ENCODE measurements at regions of chr6 and their contacts with region 1.

Region 1: DNA sequence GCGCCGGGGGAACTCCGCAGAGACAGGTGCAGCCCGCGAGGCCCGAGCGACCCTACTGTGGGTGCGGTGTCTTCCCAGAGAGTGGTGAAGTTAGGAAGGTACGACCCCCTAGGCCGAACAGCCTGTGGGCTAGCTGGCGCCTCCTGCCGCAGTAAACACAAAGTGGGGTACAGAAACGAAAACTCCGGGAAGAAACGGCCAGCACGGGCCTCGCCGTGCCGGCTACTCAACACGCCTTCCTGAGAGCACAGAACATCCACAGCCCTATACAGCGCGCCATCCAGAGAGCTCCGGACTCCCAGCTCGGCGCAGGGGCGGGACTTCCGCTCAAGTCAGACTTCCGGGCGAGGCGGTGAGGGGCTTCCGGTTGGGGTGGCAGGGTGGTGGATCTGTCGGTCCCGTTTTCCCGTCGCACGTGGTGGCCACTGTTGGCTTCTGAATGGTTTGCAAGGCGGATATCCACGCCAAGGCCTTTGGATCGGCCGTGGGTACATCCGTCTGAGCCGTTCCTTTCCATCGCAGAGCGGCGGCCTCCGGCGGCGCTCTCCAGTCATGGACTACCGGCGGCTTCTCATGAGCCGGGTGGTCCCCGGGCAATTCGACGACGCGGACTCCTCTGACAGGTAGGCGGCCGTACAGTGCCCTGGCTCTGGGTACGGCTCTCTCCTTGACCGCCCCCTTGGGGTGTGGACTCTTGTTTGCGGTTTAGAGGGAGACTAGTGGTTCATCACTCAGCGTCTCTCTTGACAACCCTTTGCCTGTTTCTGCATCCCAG is at the starts of genes CAGE1 and RIOK1:
- DNase-seq: peak; percentile 92 to 96 (median 94)
- ATAC-seq: peak; percentile 94
- H3K4me3 ChIP-seq: peak within 1 kb of the TSS; percentile 95
- H3K4me3 Mint-ChIP-seq: peak within 1 kb of the TSS; percentile 87 to 97 (median 94)
- H3K27ac ChIP-seq: peak within 1 kb of the TSS; percentile 85
- H3K27ac Mint-ChIP-seq: peak within 1 kb of the TSS; percentile 96 to 100 (median 99)
- H3K4me1 ChIP-seq: peaks cover 20 to 21% of the 10 kb centered on the region in 2 donors
- H3K4me1 Mint-ChIP-seq: peaks cover 31 to 56% (median 50%) of the 10 kb centered on the region in 7 donors
- H3K27me3 ChIP-seq: no peaks in the 10 kb centered on the region
- H3K27me3 Mint-ChIP-seq: no peaks in the 10 kb centered on the region
- total RNA-seq, gene CAGE1: 0.16 to 0.48 (median 0.22) TPM
- total RNA-seq, gene RIOK1: 24.4 to 39.9 (median 27.6) TPM

Region 2: DNA sequence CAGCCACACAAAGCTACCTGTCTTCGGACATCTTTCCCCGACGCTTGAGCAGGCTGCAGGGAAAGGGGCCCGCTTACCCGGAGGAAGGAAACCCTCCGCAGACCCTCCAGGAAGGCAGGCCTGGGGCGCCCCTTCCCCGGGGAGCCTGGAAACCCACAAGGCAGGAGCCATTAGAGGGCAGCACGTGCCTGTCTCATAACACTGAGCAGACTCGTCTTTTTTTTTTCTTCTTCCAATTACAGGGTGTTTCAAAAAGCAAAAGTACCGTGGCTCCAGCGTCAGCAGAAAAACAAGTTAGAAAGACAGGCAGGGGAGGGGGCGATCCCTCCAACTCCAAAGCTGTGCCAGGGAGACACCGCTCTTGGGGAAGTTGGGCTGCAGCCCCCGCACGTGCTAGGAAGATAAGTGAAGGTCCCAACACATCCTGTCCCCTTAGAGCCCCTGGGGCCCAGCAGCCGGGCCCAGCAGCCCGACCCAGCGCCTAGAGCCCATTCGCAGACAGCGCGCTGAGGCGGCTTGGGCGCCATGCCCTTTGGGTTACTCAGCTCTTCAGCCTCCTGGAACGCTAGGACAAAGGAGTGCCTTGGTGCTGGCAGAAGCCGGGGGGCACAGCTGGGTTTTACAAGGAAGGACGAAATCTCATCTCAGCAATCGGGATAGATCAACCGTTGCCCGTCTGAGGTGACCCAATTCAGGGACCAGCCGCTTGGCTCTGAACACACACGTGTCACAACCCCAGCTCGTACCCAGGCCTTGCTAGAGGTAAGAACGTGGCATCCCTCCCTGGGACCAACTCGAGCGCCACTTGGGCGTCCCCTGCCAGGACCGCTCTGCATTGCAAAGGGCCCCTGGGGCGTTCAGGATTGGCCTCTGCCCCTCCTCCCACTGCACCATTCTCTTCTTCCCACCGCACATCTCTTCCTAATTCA is 664.8 kb before region 1 on chr6:
- CTCF ChIA-PET with region 1: no interaction called
- POLR2A ChIA-PET with region 1: no interaction called
- intact Hi-C with region 1: loop called in 1 of 2 experiments (anchors 1 kb)
- DNase-seq: peak; percentile 33 to 74 (median 62)
- ATAC-seq: peak; percentile 82
- H3K4me3 ChIP-seq: peak overlapping the region; percentile 44
- H3K4me3 Mint-ChIP-seq: peak overlapping the region; percentile 67 to 89 (median 81)
- H3K27ac ChIP-seq: no peak overlapping the region
- H3K27ac Mint-ChIP-seq: peak overlapping the region; percentile 47 to 84 (median 74)
- H3K4me1 ChIP-seq: peaks cover 0 to 5% of the 10 kb centered on the region in 2 donors
- H3K4me1 Mint-ChIP-seq: peaks cover 6 to 28% (median 12%) of the 10 kb centered on the region in 7 donors
- H3K27me3 ChIP-seq: no peaks in the 10 kb centered on the region
- H3K27me3 Mint-ChIP-seq: peaks cover 0 to 43% (median 0%) of the 10 kb centered on the region in 5 donors

Region 3: GRCh38 chr6:6905961-6906518 is 483.6 kb before region 1 on chr6:
- CTCF ChIA-PET with region 1: no interaction called
- POLR2A ChIA-PET with region 1: no interaction called
- intact Hi-C with region 1: no loop called
- DNase-seq: no peak
- ATAC-seq: no peak
- H3K4me3 ChIP-seq: no peak overlapping the region
- H3K4me3 Mint-ChIP-seq: no peak overlapping the region
- H3K27ac ChIP-seq: no peak overlapping the region
- H3K27ac Mint-ChIP-seq: no peak overlapping the region
- H3K4me1 ChIP-seq: no peaks in the 10 kb centered on the region
- H3K4me1 Mint-ChIP-seq: peaks cover 0 to 2% (median 0%) of the 10 kb centered on the region in 7 donors
- H3K27me3 ChIP-seq: no peaks in the 10 kb centered on the region
- H3K27me3 Mint-ChIP-seq: peaks cover 0 to 42% (median 0%) of the 10 kb centered on the region in 5 donors

Region 4: DNA sequence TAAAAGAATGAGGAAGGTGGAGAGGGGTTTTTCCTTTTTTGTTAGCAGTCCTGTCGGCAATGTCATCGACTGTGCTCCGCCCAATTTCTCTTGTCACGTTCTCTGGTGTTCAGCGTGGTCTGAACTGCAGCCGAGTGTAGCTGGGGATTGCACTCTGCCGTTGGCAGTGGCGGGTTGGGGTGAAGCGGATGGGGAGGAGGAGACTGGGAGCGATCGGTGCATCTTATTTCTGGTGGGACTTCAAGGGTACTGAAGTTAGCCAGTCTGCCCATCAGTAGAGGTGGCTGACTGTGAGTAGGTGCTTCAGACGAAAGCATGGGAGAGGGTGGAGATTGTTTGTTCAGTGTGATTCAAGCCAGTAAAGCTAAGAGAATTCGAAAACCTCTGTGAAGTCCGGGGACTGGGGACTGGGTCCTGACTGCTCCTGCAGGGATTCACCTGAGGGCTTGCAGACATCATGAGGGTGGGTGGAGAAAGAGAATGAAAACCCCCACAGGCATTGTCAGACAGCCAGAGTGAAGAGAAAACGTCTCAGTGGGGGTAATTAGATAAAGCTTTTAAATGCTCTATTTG is 276.8 kb before region 1 on chr6:
- CTCF ChIA-PET with region 1: no interaction called
- POLR2A ChIA-PET with region 1: interaction called, 3 read pairs
- intact Hi-C with region 1: loop called in 1 of 2 experiments (anchors 10 kb)
- DNase-seq: peak; percentile 31 to 77 (median 62)
- ATAC-seq: peak; percentile 79
- H3K4me3 ChIP-seq: peak overlapping the region; percentile 3
- H3K4me3 Mint-ChIP-seq: peak overlapping the region; percentile 63 to 92 (median 82)
- H3K27ac ChIP-seq: peak overlapping the region; percentile 82
- H3K27ac Mint-ChIP-seq: peak overlapping the region; percentile 65 to 94 (median 88)
- H3K4me1 ChIP-seq: peaks cover 9 to 59% of the 10 kb centered on the region in 2 donors
- H3K4me1 Mint-ChIP-seq: peaks cover 57 to 84% (median 78%) of the 10 kb centered on the region in 7 donors
- H3K27me3 ChIP-seq: no peaks in the 10 kb centered on the region
- H3K27me3 Mint-ChIP-seq: no peaks in the 10 kb centered on the region

Region 5: GRCh38 chr6:7276199-7276524 is 113.5 kb before region 1 on chr6:
- CTCF ChIA-PET with region 1: interaction called, 4 read pairs
- POLR2A ChIA-PET with region 1: interaction called, 4 read pairs
- intact Hi-C with region 1: loop called (anchors 1 kb)
- DNase-seq: no peak
- ATAC-seq: no peak
- H3K4me3 ChIP-seq: no peak overlapping the region
- H3K4me3 Mint-ChIP-seq: no peak overlapping the region
- H3K27ac ChIP-seq: no peak overlapping the region
- H3K27ac Mint-ChIP-seq: peak overlapping the region in 1 of 9 donors; percentile 56
- H3K4me1 ChIP-seq: no peaks in the 10 kb centered on the region
- H3K4me1 Mint-ChIP-seq: peaks cover 6 to 13% (median 10%) of the 10 kb centered on the region in 7 donors
- H3K27me3 ChIP-seq: no peaks in the 10 kb centered on the region
- H3K27me3 Mint-ChIP-seq: no peaks in the 10 kb centered on the region

Region 6: DNA sequence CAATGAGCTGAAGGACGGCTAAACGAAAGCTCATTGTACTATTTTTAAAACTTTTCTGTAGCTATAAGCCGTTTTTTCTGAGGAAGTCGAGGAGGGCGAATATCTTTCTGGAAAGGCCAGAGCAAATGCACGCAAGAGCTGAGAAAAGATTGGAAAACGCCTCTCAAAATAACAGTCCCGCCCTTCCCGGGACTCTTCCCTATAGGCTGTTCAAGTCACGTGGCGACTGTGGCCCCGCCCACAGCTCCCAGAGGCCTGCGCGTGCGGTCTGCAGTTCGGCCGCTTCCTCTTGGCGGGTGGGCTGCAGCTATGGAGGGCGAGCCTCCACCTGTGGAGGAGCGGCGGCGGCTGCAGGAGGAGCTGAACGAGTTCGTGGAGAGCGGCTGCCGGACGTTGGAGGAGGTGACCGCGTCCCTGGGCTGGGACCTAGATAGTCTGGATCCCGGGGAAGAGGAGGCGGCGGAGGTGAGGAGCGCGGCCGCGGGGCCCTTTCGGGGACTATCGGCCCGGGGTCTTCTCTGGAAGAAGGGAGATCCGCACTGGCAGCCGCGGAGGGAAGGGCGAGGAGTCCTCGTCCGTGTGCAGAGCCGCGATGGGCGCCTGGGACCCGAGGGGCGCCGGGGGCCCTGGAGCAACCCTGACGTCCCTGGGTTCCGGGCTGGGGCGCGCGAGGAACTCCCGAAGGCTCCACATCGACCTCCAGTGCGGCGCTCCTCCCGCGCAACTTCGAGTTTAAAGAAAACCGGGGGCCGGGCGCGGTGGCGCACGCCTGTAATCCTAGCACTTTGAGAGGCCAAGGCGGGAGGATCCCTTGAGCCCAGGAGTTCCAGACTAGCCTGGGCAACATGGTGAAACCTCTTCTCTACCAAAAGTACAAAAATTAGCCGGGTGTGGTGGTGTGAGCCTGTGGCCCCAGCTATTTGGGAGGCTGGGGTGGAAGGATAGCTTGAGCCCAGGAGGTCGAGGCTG is 200.6 kb after region 1 on chr6 and contains the start of gene SNRNP48:
- CTCF ChIA-PET with region 1: no interaction called
- POLR2A ChIA-PET with region 1: interaction called, 4 read pairs
- intact Hi-C with region 1: loop called (anchors 1 kb)
- DNase-seq: peak; percentile 83 to 93 (median 88)
- ATAC-seq: peak; percentile 99
- H3K4me3 ChIP-seq: peak within 1 kb of the TSS; percentile 89
- H3K4me3 Mint-ChIP-seq: peak within 1 kb of the TSS; percentile 93 to 100 (median 99)
- H3K27ac ChIP-seq: peak within 1 kb of the TSS; percentile 77
- H3K27ac Mint-ChIP-seq: peak within 1 kb of the TSS; percentile 90 to 97 (median 94)
- H3K4me1 ChIP-seq: peaks cover 12 to 17% of the 10 kb centered on the region in 2 donors
- H3K4me1 Mint-ChIP-seq: peaks cover 28 to 62% (median 54%) of the 10 kb centered on the region in 7 donors
- H3K27me3 ChIP-seq: no peaks in the 10 kb centered on the region
- H3K27me3 Mint-ChIP-seq: peaks cover 0 to 2% (median 0%) of the 10 kb centered on the region in 5 donors
- total RNA-seq, gene SNRNP48: 8.6 to 30.4 (median 15.3) TPM

Region 7: DNA sequence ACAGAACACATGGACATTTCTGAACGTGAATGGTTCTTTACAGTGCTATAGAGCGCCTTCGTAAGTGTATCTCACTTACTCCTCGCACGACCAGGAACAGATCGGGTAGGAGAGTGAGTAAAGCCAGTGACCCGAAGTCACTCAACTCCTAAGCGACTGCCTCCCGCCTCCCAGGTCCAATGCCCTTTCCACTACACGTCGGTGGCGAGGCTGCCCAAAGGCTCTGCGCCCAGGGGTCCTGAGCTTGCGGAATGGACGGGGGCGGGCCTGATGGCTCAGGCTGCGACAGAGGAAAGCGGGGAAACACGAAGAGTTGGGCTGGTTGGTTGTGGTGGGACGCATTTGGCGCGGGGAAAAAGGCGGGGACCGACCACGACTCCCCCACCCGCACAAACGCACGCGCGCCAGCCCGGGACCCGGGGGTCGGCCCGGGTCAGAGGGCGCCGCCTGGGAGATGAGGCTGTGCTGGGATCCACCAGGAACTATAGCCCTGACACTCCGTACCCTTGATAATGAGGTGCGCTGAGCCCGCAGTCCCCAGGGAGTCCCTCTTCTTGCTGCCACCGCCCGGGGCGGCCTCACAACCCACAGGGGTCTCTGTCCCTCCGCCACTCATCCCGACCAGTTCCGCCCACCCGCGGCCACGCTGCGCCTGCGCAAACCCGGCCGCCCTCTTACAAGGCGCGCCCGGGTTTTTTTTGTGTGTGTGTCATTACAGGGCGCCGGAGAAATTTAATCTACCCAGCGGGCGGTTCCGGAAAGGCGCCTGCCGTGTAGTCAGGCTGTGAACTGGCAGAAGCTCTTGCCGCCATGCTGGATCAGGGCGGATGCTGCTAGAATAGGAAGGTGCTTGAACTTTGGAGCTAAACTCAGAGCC is 674.4 kb after region 1 on chr6 and contains the start of gene BLOC1S5:
- CTCF ChIA-PET with region 1: no interaction called
- POLR2A ChIA-PET with region 1: interaction called, 5 read pairs
- intact Hi-C with region 1: loop called (anchors 1 kb)
- DNase-seq: peak; percentile 89 to 99 (median 97)
- ATAC-seq: peak; percentile 98
- H3K4me3 ChIP-seq: peak within 1 kb of the TSS; percentile 89
- H3K4me3 Mint-ChIP-seq: peak within 1 kb of the TSS; percentile 91 to 98 (median 95)
- H3K27ac ChIP-seq: peak within 1 kb of the TSS; percentile 92
- H3K27ac Mint-ChIP-seq: peak within 1 kb of the TSS; percentile 91 to 97 (median 95)
- H3K4me1 ChIP-seq: peaks cover 10% of the 10 kb centered on the region in 2 donors
- H3K4me1 Mint-ChIP-seq: peaks cover 9 to 38% (median 28%) of the 10 kb centered on the region in 7 donors
- H3K27me3 ChIP-seq: no peaks in the 10 kb centered on the region
- H3K27me3 Mint-ChIP-seq: no peaks in the 10 kb centered on the region
- total RNA-seq, gene BLOC1S5: 9.6 to 26.2 (median 22.6) TPM

Region 8: DNA sequence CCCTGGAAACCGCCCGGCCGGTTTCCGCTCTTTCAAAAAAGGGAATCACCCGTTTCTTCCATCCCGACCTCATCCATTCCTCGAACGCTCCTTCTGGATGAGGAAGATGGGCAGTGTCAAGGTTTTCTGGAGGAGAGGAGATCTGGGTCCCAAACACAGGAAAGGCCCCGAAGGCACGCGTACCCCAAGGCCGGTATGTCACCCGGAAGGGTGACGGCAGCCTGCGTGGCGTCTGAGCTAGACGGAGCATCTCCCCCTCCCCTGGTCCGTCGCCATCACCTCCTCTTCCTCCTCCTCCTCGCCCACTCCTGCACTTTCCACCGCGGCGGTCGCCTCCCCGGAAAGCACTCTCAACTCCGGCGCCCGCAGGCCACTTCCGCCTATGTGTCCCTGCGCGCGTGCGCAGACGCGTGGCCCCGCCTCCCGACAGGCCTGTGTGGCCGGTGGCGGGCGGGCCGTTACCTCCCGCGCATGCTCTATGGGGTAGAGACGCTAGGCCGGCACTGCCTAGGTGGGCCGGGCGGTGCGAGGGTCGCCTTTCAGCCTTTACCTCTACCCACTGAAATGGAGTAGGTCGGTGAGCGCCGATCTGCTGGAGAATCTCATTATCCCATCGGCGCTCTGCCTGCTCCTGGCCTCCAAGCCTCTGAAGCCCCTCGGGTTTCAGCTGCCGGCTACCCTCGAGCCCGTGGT is 1045.7 kb after region 1 on chr6 and contains the start of gene SLC35B3:
- CTCF ChIA-PET with region 1: no interaction called
- POLR2A ChIA-PET with region 1: no interaction called
- intact Hi-C with region 1: loop called (anchors 1 kb)
- DNase-seq: peak; percentile 95 to 100 (median 98)
- ATAC-seq: peak; percentile 95
- H3K4me3 ChIP-seq: peak within 1 kb of the TSS; percentile 99
- H3K4me3 Mint-ChIP-seq: peak within 1 kb of the TSS; percentile 92 to 97 (median 96)
- H3K27ac ChIP-seq: peak within 1 kb of the TSS; percentile 96
- H3K27ac Mint-ChIP-seq: peak within 1 kb of the TSS; percentile 93 to 99 (median 98)
- H3K4me1 ChIP-seq: peaks cover 13 to 24% of the 10 kb centered on the region in 2 donors
- H3K4me1 Mint-ChIP-seq: peaks cover 17 to 57% (median 48%) of the 10 kb centered on the region in 7 donors
- H3K27me3 ChIP-seq: no peaks in the 10 kb centered on the region
- H3K27me3 Mint-ChIP-seq: peaks cover 0 to 3% (median 0%) of the 10 kb centered on the region in 5 donors
- total RNA-seq, gene SLC35B3: 5.5 to 18.5 (median 11.1) TPM

Measured in naive thymus-derived CD4-positive, alpha-beta T cell (primary cell).